ENCODE measurements at regions of chr14 and their contacts with region 1.

Region 1: GRCh38 chr14:74324931-74325361 is 22.2 kb upstream of the ABCD4 start:
- DNase-seq: peak in 1 of 2 experiments; percentile 57
- H3K4me3 ChIP-seq: no peak overlapping the region
- H3K27ac ChIP-seq: peak overlapping the region; percentile 66; the same call in 1 of the 2 replicates
- H3K4me1 ChIP-seq: peaks cover 16 to 22% (median 19%) of the 10 kb centered on the region in 4 experiments
- H3K27me3 ChIP-seq: no peaks in the 10 kb centered on the region
- CTCF ChIP-seq: peak in 2 of 3 experiments; percentile 50 to 61; a peak in 2 of 4 replicates
- EP300 ChIP-seq: no peak
- POLR2A ChIP-seq: 0 out of 3 replicates have a peak, but pooled peaks of 1 of the 2 experiments have one; percentile 25
- RAD21 ChIP-seq: peak; percentile 77 to 78

Region 2: GRCh38 chr14:74302634-74303577 is 22.0 kb before region 1 on chr14 and contains the start of gene ABCD4:
- CTCF ChIA-PET with region 1: interaction called, 25 read pairs
- POLR2A ChIA-PET with region 1: interaction called, 30 read pairs
- DNase-seq: peak; percentile 90 to 99
- H3K4me3 ChIP-seq: peak within 1 kb of the TSS; percentile 76 to 99 (median 80)
- H3K27ac ChIP-seq: peak within 1 kb of the TSS; percentile 46; the same call in 1 of the 2 replicates
- H3K4me1 ChIP-seq: no peaks in the 10 kb centered on the region
- H3K27me3 ChIP-seq: no peaks in the 10 kb centered on the region
- CTCF ChIP-seq: peak; percentile 57 to 70 (median 63)
- EP300 ChIP-seq: 0 out of 3 replicates have a peak, but pooled peaks of 1 of the 2 experiments have one; percentile 60
- POLR2A ChIP-seq: peak; percentile 98 to 100
- RAD21 ChIP-seq: 0 out of 4 replicates have a peak, but pooled peaks of 1 of the 2 experiments have one; percentile 8
- total RNA-seq, gene ABCD4: 84.8 and 97.7 TPM in 2 replicates

Region 3: GRCh38 chr14:74309125-74310022 is 15.6 kb before region 1 on chr14:
- CTCF ChIA-PET with region 1: interaction called, 14 read pairs
- POLR2A ChIA-PET with region 1: interaction called, 11 read pairs
- DNase-seq: no peak
- H3K4me3 ChIP-seq: no peak overlapping the region
- H3K27ac ChIP-seq: no peak overlapping the region
- H3K4me1 ChIP-seq: no peaks in the 10 kb centered on the region
- H3K27me3 ChIP-seq: no peaks in the 10 kb centered on the region
- CTCF ChIP-seq: no peak
- EP300 ChIP-seq: no peak
- POLR2A ChIP-seq: no peak
- RAD21 ChIP-seq: no peak

Region 4: GRCh38 chr14:74314576-74314975 is 10.4 kb before region 1 on chr14:
- CTCF ChIA-PET with region 1: interaction called, 14 read pairs
- POLR2A ChIA-PET with region 1: interaction called, 11 read pairs
- DNase-seq: no peak
- H3K4me3 ChIP-seq: no peak overlapping the region
- H3K27ac ChIP-seq: no peak overlapping the region
- H3K4me1 ChIP-seq: no peaks in the 10 kb centered on the region
- H3K27me3 ChIP-seq: no peaks in the 10 kb centered on the region
- CTCF ChIP-seq: no peak
- EP300 ChIP-seq: no peak
- POLR2A ChIP-seq: no peak
- RAD21 ChIP-seq: no peak

Region 5: GRCh38 chr14:74349757-74350156 is 24.8 kb after region 1 on chr14:
- CTCF ChIA-PET with region 1: interaction called, 35 read pairs
- POLR2A ChIA-PET with region 1: interaction called, 282 read pairs
- DNase-seq: no peak
- H3K4me3 ChIP-seq: peak overlapping the region; percentile 87 to 98 (median 90)
- H3K27ac ChIP-seq: peak overlapping the region; percentile 92; the same call in 1 of the 2 replicates
- H3K4me1 ChIP-seq: peaks cover 4 to 20% (median 12%) of the 10 kb centered on the region in 4 experiments
- H3K27me3 ChIP-seq: no peaks in the 10 kb centered on the region
- CTCF ChIP-seq: no peak
- EP300 ChIP-seq: no peak
- POLR2A ChIP-seq: no peak
- RAD21 ChIP-seq: no peak

Region 6: DNA sequence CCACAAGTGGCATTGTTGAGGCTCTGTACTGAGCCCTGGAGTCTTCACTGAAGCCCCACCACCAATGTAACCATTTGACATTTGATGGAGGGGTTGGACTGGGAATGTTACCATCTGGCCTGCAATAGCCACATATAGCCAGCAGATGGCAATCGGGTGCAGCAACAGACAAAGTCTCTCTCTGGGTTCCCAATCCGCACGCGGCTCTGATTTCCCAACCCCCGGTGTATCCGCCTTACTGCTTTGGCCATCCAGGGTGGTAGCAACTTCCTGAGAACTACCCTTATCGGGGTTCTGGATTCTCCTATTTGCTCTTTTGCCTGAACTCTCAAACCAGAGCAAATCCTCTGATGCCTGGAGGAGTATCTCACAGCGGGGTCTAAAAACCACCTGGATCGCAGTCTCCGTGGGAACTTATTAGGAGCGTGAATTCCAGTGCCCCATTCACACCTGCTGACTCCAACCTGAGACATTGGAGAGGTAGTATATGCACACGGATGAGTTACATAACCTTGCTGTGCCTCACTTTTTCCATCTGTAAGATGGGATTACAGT is 37.5 kb after region 1 on chr14:
- CTCF ChIA-PET with region 1: interaction called, 35 read pairs
- POLR2A ChIA-PET with region 1: interaction called, 74 read pairs
- DNase-seq: peak; percentile 77 to 96
- H3K4me3 ChIP-seq: no peak overlapping the region
- H3K27ac ChIP-seq: no peak overlapping the region
- H3K4me1 ChIP-seq: peaks cover 11 to 31% (median 14%) of the 10 kb centered on the region in 4 experiments
- H3K27me3 ChIP-seq: no peaks in the 10 kb centered on the region
- CTCF ChIP-seq: peak; percentile 85 to 99 (median 92)
- EP300 ChIP-seq: no peak; a peak in 1 of 3 replicates
- POLR2A ChIP-seq: peak in 1 of 2 experiments; percentile 40; a peak in 1 of 3 replicates
- RAD21 ChIP-seq: peak; percentile 96 to 97

Region 7: GRCh38 chr14:74469548-74470518 is 144.9 kb after region 1 on chr14:
- CTCF ChIA-PET with region 1: interaction called, 77 read pairs
- POLR2A ChIA-PET with region 1: interaction called, 10 read pairs
- DNase-seq: peak in 1 of 2 experiments; percentile 11
- H3K4me3 ChIP-seq: no peak overlapping the region
- H3K27ac ChIP-seq: no peak overlapping the region
- H3K4me1 ChIP-seq: no peaks in the 10 kb centered on the region
- H3K27me3 ChIP-seq: no peaks in the 10 kb centered on the region
- CTCF ChIP-seq: no peak
- EP300 ChIP-seq: no peak
- POLR2A ChIP-seq: no peak
- RAD21 ChIP-seq: no peak

Region 8: DNA sequence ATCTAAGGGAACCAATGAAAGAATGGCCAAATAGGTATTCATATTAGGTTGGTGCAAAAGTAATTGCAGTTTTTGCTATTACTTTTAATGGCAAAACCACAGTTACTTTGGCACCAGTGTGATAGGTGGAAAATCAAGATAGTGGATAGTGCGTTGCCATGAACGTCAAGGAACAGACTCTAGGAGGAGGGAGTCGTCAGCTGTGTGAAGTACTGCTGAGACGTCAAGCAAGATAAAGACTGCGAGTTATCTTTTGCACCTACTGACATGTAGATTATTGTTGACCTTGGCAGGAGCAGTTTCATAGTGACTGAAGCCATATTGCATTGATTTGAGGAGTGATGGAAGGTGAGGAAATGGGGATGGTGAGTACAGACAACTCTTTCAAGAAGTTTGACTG is 446.5 kb after region 1 on chr14:
- CTCF ChIA-PET with region 1: no interaction called
- POLR2A ChIA-PET with region 1: no interaction called
- DNase-seq: no peak
- H3K4me3 ChIP-seq: no peak overlapping the region
- H3K27ac ChIP-seq: no peak overlapping the region
- H3K4me1 ChIP-seq: no peaks in the 10 kb centered on the region; a peak in 1 of 7 replicates
- H3K27me3 ChIP-seq: no peaks in the 10 kb centered on the region
- CTCF ChIP-seq: no peak
- EP300 ChIP-seq: no peak
- POLR2A ChIP-seq: no peak
- RAD21 ChIP-seq: no peak

Measured in H1 (cell line).